ENCODE measurements at regions of chr17 and their contacts with region 1.

Region 1: GRCh38 chr17:50139950-50140871 is 10.3 kb upstream of the SAMD14 start:
- DNase-seq: peak; percentile 77 to 80 (median 78)
- H3K4me3 ChIP-seq: peak overlapping the region; percentile 8 to 38
- H3K4me3 Mint-ChIP-seq: peak overlapping the region; percentile 68 to 99 (median 79)
- H3K27ac ChIP-seq: peak overlapping the region; percentile 68
- H3K27ac Mint-ChIP-seq: peak overlapping the region; percentile 85 to 92 (median 91)
- H3K4me1 ChIP-seq: peaks cover 72% of the 10 kb centered on the region
- H3K4me1 Mint-ChIP-seq: peaks cover 48 to 84% (median 65%) of the 10 kb centered on the region in 4 donors
- H3K27me3 ChIP-seq: no peaks in the 10 kb centered on the region
- H3K27me3 Mint-ChIP-seq: no peaks in the 10 kb centered on the region

Region 2: DNA sequence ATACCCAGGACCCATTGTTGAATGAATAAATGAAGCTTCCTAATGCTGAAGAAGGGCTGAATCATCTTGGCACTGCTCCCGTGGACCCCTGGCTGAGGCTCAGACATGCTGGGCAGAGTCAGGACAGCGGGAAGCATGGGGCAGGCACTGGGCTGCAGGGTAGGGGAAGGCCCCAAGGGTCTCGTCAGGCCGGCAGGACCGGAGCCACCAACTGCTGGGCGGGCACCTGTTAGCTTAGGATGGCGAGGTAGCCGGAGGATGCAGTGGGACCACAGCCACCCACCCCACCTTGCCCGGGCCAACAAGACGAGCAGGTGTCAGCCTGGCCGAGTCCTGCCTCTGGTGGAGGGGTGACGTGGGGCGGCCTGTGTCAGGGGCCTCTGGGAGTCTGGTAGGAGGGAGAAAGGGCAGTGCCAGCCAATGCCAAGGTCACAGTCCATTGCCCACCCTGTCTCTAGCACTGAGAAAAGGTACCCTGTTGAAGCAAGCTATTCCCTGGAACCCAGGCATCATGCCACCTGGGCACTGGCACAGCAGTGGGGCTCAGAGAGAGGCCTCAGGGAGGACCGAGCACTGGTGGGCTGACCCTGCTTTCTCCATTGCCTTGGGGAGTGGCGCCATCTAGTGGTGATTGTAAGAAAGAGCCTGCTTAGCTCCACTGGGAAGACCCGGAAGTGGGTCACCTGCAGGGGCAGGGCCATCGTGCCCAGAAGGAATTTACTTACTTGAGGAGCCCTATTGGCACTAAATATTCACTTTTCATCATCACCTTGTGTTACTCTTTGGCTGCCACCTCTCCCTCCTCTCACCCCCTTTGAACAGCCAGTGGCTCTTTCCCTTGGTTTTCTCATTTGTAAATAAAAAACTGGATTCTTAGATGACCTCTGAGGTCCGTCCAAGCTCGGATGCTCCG is 142.2 kb before region 1 on chr17:
- CTCF ChIA-PET with region 1: no interaction called
- POLR2A ChIA-PET with region 1: no interaction called
- intact Hi-C with region 1: no loop called
- DNase-seq: peak; percentile 80 to 83 (median 82)
- H3K4me3 ChIP-seq: no peak overlapping the region
- H3K4me3 Mint-ChIP-seq: peak overlapping the region in 1 of 8 donors; percentile 43
- H3K27ac ChIP-seq: no peak overlapping the region
- H3K27ac Mint-ChIP-seq: peak overlapping the region in 1 of 7 donors; percentile 55
- H3K4me1 ChIP-seq: peaks cover 35% of the 10 kb centered on the region
- H3K4me1 Mint-ChIP-seq: peaks cover 19 to 43% (median 25%) of the 10 kb centered on the region in 4 donors
- H3K27me3 ChIP-seq: peaks cover 61% of the 10 kb centered on the region
- H3K27me3 Mint-ChIP-seq: peaks cover 62 to 64% of the 10 kb centered on the region in 2 donors

Region 3: DNA sequence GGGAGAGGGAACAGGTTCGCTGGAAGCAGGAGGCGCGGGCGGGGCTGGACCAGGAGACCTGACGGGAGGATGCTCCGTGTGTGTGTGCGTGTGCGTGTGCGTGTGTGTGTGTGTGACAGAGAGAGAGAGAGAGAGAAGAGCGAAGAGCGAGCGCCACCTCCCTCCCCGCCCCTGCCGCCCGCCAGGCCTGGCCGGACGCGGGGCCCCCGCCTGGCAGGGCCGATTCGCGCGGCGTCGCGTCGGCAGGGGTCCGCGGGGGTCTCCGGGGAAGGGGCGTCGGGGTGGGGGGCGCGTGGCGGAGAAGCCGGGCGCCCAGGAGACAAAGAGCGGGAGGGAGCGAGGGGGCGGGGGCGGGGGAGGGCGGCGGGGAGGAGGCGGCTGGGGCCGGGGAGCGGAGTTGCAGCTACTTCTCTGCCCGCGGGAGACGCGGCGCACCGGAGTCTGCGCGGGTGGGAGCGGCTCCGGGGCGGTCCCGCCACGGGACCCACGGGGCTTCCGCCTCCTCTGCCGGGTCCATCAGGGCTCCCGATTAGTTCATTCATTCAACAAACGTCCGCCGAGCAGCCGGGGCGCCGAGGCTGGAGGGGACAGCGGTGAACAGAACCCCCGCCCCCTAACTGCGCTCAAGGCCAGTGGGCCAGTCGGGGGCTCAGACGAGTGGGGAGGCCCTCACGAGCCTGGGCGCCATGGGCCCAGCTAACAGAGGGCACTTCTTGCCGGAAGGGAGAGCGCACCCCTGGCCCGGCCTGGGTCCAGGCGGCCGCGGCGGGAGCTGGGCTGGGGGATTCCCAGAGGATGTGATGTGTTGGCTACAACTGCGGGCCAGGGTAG is 10.3 kb before region 1 on chr17 and contains the start of gene SAMD14:
- CTCF ChIA-PET with region 1: interaction called, 4 read pairs
- POLR2A ChIA-PET with region 1: interaction called, 14 read pairs
- intact Hi-C with region 1: no loop called
- DNase-seq: peak; percentile 63 to 80 (median 68)
- H3K4me3 ChIP-seq: peak within 1 kb of the TSS in 1 of 2 donors; percentile 49
- H3K4me3 Mint-ChIP-seq: peak within 1 kb of the TSS; percentile 76 to 95 (median 84)
- H3K27ac ChIP-seq: no peak within 1 kb of the TSS
- H3K27ac Mint-ChIP-seq: peak within 1 kb of the TSS; percentile 72 to 99 (median 92)
- H3K4me1 ChIP-seq: peaks cover 26% of the 10 kb centered on the region
- H3K4me1 Mint-ChIP-seq: peaks cover 11 to 42% (median 26%) of the 10 kb centered on the region in 4 donors
- H3K27me3 ChIP-seq: peaks cover 6% of the 10 kb centered on the region
- H3K27me3 Mint-ChIP-seq: peaks cover 3 to 7% of the 10 kb centered on the region in 2 donors
- total RNA-seq, gene SAMD14: 1.2 to 1.3 TPM

Region 4: DNA sequence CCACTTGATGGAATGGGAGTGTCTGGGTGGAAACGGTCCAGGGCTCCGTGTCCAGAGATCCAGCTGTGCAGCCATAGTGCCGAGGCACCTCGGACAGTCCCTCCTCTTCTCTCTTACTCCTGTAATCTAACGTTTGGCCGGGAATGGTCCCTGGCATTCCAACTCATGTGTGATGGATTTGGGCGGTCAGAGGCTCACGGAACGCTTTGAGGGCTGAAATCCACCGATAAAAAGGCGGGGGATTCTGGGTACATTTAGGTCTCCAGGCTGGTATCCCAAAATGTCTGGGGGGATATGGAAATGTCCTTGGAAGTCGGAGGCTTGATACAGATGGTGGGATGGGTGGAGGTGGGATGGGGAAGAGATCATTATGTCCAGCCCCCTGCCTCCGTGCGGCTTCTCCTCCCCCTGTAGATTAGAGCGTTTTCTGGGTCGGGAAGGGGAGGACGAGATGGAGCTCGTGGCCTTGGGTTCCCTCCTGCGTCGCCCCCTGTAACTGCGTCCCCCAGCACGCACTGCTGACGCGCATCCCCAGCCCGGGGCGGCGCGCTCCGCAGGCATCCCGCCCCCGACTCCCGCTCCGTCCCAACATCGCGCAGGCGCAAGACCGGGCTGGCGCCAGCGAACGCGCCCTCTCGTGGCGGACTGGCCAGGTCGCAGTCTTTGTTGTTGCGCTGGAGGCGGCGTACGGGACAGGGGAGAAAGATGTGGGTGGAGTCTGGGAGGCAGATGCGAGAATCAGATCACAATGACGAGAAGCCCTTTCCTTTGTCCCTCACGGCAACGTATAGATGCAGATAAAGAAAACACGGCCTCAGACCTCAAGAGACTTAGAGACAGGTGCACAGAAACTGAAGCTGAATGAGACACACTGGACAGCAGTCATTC is 21.1 kb after region 1 on chr17:
- CTCF ChIA-PET with region 1: interaction called, 118 read pairs
- POLR2A ChIA-PET with region 1: interaction called, 102 read pairs
- intact Hi-C with region 1: loop called (anchors 1 kb)
- DNase-seq: peak; percentile 92 to 95 (median 93)
- H3K4me3 ChIP-seq: peak overlapping the region; percentile 76 to 78
- H3K4me3 Mint-ChIP-seq: peak overlapping the region; percentile 59 to 86 (median 74)
- H3K27ac ChIP-seq: peak overlapping the region; percentile 46
- H3K27ac Mint-ChIP-seq: peak overlapping the region; percentile 45 to 99 (median 93)
- H3K4me1 ChIP-seq: peaks cover 34% of the 10 kb centered on the region
- H3K4me1 Mint-ChIP-seq: peaks cover 23 to 53% (median 30%) of the 10 kb centered on the region in 4 donors
- H3K27me3 ChIP-seq: no peaks in the 10 kb centered on the region
- H3K27me3 Mint-ChIP-seq: no peaks in the 10 kb centered on the region

Region 5: DNA sequence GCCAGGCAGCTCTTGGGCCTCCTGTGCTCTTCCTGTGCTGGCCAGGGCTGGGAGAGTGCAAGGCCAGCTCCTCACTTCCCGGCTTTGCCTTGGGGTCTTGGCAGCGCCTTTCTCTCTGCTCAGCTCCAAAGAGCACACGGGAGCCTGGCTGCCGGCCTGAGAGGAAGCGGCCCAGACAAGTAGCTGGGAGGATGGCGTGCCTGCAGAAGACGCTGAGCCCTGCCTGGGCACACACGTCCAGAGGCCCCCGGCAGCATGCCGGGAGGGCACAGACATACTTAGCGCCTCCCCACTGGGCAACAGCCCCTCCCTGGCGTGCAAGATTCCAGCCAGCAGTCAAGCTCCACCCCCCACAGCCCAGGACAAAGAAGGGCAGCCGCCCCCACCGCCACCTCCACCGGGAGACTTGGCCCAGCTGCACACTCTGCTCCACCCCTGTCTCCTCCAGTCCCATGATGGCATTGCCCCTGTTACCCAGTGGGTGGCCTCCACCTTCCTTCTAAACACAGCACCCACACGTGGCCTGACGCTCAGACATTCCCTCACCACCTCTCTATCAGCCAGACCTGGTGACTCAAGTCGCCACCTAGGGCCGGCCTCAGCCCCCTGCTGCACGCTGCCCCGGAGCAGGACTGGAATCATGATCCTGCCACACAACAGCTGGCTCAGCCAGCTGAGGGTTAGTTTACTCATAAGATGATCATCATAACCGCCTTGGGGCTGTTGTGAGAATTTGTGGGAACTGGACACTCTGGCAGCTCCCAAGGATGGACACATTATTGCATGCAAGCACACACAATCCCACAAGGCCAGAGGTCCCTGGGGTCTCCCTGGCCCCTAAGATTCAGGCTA is 38.0 kb after region 1 on chr17:
- CTCF ChIA-PET with region 1: interaction called, 38 read pairs
- POLR2A ChIA-PET with region 1: no interaction called
- intact Hi-C with region 1: loop called (anchors 1 kb)
- DNase-seq: peak; percentile 27 to 73 (median 37)
- H3K4me3 ChIP-seq: no peak overlapping the region
- H3K4me3 Mint-ChIP-seq: peak overlapping the region in 7 of 8 donors; percentile 43 to 79 (median 61)
- H3K27ac ChIP-seq: no peak overlapping the region
- H3K27ac Mint-ChIP-seq: peak overlapping the region in 4 of 7 donors; percentile 17 to 80 (median 30)
- H3K4me1 ChIP-seq: peaks cover 4% of the 10 kb centered on the region
- H3K4me1 Mint-ChIP-seq: peaks cover 6 to 20% (median 9%) of the 10 kb centered on the region in 4 donors
- H3K27me3 ChIP-seq: no peaks in the 10 kb centered on the region
- H3K27me3 Mint-ChIP-seq: no peaks in the 10 kb centered on the region

Measured in CD4-positive, alpha-beta memory T cell (primary cell).